ENCODE measurements at regions of chr10 and their contacts with region 1.

Region 1: GRCh38 chr10:93080350-93081046 is 6.8 kb downstream of the CYP26A1 start:
- DNase-seq: peak in 41 of 42 donors; percentile 36 to 86 (median 63)

Region 2: GRCh38 chr10:93293999-93294398 is 213.5 kb after region 1 on chr10:
- intact Hi-C with region 1: loop called (anchors 10 kb)
- DNase-seq: no peak

Region 3: GRCh38 chr10:93352638-93353383 is 272.3 kb after region 1 on chr10:
- intact Hi-C with region 1: loop called (anchors 10 kb)
- DNase-seq: peak in 2 of 42 donors; percentile 12 to 39

Measured in head of caudate nucleus (tissue), 42 donors.